GM12878 (cell line): ENCODE measurements at regions of chr3 and their contacts with region 1.

Region 1: DNA sequence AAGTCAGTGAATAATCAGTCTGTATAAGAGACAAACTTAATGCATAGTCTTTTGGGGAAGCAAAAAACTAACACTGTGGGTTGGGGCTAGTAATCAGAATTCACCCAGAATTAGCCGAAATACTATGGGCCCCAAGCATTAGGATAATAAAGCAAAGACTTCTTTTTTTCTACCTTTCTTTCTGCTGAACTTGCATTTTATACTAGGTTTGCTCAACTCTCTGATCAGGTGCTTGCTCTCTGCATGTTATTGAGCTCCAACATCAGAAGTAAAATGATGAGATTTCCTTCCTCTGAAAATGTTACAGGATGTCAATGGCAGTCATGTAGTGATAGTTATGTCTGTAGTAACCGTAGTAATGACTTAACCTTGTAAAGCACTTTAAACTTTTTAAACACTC is 216.6 kb downstream of the KCNMB2 start:
- DNase-seq: no peak
- ATAC-seq: no peak
- H3K4me3 ChIP-seq: no peak overlapping the region
- H3K27ac ChIP-seq: no peak overlapping the region
- H3K4me1 ChIP-seq: peaks cover 9% of the 10 kb centered on the region
- H3K27me3 ChIP-seq: no peaks in the 10 kb centered on the region
- CTCF ChIP-seq: no peak
- EP300 ChIP-seq: no peak
- POLR2A ChIP-seq: no peak
- RAD21 ChIP-seq: no peak

Region 2: DNA sequence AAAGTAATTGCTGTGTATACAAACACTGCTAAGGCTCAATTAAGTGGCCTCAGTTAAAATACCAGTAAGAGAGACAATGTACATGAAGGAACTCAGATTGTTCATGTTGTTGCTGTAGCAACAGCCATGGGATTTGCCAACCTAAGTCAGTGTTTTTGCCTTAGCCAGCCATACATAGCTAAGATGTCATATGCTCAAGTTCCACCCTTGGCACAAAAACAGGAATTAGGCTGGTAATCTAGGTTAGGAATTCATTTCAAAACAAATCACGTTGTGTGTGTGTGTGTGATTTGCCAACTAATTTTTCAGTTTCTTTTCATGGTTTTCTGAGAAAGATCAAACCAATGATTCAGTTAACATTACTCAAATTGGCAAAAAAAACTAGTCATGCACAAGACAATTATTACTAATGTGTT is 360.3 kb before region 1 on chr3:
- CTCF ChIA-PET with region 1: no interaction called
- POLR2A ChIA-PET with region 1: no interaction called
- RAD21 ChIA-PET with region 1: no interaction called
- SMC1A ChIA-PET with region 1: no interaction called
- in situ Hi-C with region 1: no loop called
- intact Hi-C with region 1: no loop called
- DNase-seq: no peak
- ATAC-seq: no peak
- H3K4me3 ChIP-seq: no peak overlapping the region
- H3K27ac ChIP-seq: no peak overlapping the region
- H3K4me1 ChIP-seq: no peaks in the 10 kb centered on the region
- H3K27me3 ChIP-seq: no peaks in the 10 kb centered on the region
- CTCF ChIP-seq: no peak
- EP300 ChIP-seq: no peak
- POLR2A ChIP-seq: no peak
- RAD21 ChIP-seq: no peak

Region 3: GRCh38 chr3:178663201-178663934 is 89.5 kb before region 1 on chr3:
- CTCF ChIA-PET with region 1: no interaction called
- POLR2A ChIA-PET with region 1: no interaction called
- RAD21 ChIA-PET with region 1: no interaction called
- SMC1A ChIA-PET with region 1: no interaction called
- in situ Hi-C with region 1: no loop called
- intact Hi-C with region 1: no loop called
- DNase-seq: no peak
- ATAC-seq: peak; percentile 87
- H3K4me3 ChIP-seq: no peak overlapping the region
- H3K27ac ChIP-seq: no peak overlapping the region
- H3K4me1 ChIP-seq: no peaks in the 10 kb centered on the region; the same call in 1 of the 2 replicates
- H3K27me3 ChIP-seq: no peaks in the 10 kb centered on the region
- CTCF ChIP-seq: no peak
- EP300 ChIP-seq: 0 out of 4 replicates have a peak, but pooled peaks have one; percentile 37 to 52
- POLR2A ChIP-seq: no peak
- RAD21 ChIP-seq: peak; percentile 25; the same call in 1 of the 2 replicates

Region 4: GRCh38 chr3:178785961-178786360 is 33.1 kb after region 1 on chr3:
- CTCF ChIA-PET with region 1: no interaction called
- POLR2A ChIA-PET with region 1: no interaction called
- RAD21 ChIA-PET with region 1: no interaction called
- SMC1A ChIA-PET with region 1: no interaction called
- in situ Hi-C with region 1: no loop called
- intact Hi-C with region 1: loop called (anchors 1 kb)
- DNase-seq: no peak
- ATAC-seq: no peak
- H3K4me3 ChIP-seq: no peak overlapping the region
- H3K27ac ChIP-seq: no peak overlapping the region
- H3K4me1 ChIP-seq: no peaks in the 10 kb centered on the region
- H3K27me3 ChIP-seq: no peaks in the 10 kb centered on the region
- CTCF ChIP-seq: no peak
- EP300 ChIP-seq: no peak
- POLR2A ChIP-seq: no peak
- RAD21 ChIP-seq: no peak